CD8-positive, alpha-beta memory T cell (primary cell): ENCODE measurements at regions of chr15 and their contacts with region 1.

Region 1: DNA sequence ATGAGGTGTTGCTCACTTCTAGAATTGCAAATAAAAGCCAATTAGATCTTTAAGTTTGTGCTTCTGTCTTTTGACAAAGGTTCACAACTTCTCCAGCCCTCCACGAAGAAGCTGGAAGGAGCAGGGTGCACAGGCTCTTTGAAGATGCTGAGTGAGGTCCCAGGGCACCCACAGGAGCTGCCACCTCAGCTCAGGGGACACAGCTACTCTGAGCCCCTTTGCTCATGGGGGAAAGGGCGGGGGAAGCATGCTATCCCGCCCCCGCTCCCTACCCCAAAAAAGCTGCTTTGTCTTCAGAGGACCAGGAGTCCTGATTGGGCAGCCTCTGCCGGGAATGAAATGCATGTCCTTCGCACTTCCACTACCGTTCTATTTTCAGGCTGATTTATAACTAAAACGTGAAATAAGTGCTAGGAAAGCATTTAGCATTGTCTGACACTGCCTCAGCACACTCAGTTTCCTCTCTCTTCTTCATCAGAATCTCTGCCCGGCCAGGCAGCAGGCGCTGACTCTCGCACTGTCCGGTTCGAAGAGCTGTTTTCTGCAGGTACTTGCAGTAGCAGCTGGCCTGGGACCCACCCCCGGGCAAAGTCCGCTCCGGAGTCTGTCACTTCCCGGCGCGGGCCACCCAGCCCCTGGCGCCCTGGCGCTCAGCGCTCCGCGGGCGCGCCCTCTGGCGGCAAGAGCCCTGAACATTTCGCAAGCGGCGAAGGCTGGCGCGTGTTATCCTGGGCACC is 45.5 kb upstream of the KLHL25 start:
- DNase-seq: peak; percentile 67 to 79 (median 70)
- H3K4me3 ChIP-seq: peak overlapping the region; percentile 54
- H3K4me3 Mint-ChIP-seq: peak overlapping the region in 6 of 7 donors; percentile 50 to 81 (median 68)
- H3K27ac ChIP-seq: no peak overlapping the region
- H3K27ac Mint-ChIP-seq: no peak overlapping the region
- H3K4me1 ChIP-seq: peaks cover 4% of the 10 kb centered on the region
- H3K4me1 Mint-ChIP-seq: peaks cover 0 to 5% (median 5%) of the 10 kb centered on the region in 3 donors
- H3K27me3 ChIP-seq: no peaks in the 10 kb centered on the region
- H3K27me3 Mint-ChIP-seq: peaks cover 5 to 9% of the 10 kb centered on the region in 2 donors

Region 2: DNA sequence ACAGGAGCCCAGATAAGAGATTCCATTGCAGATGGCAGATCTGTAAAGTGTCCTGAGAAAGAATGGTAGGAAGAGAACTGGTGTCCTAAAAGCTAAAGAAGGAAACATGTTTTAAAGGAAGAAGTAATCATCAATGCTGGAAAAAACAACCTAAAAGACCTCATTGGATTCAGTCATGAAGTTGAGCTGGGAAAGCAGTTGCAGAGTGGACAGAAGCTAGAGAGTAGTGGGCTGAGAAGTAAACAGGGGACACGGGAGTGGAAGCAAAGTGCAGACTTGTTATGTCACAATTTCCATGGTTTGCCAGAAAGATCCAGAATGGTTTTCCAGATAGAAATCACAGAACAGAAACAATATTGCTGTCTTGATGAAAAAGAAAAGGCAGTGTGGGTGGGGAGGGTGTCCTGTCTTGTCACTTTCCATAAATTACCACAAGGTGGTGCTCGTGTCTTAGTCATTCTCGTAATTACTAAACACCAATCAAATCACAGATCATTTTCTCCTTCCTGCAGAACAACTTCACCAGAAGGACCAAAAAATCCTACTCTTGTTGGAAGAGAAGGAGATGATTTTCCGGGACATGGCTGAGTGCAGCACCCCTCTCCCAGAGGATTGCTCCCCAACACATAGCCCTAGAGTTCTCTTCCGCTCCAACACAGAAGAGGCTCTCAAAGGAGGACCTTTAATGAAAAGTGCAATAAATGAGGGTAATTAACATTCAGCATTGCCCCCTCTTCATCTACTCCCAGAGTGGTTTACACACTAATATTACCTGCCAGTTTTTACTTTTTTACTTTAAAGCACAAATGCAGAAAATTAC is 110.0 kb before region 1 on chr15:
- CTCF ChIA-PET with region 1: interaction called, 39 read pairs
- POLR2A ChIA-PET with region 1: no interaction called
- DNase-seq: peak in 3 of 5 donors; percentile 55 to 61 (median 55)
- H3K4me3 ChIP-seq: no peak overlapping the region
- H3K4me3 Mint-ChIP-seq: no peak overlapping the region
- H3K27ac ChIP-seq: no peak overlapping the region
- H3K27ac Mint-ChIP-seq: peak overlapping the region; percentile 18 to 89 (median 83)
- H3K4me1 ChIP-seq: no peaks in the 10 kb centered on the region
- H3K4me1 Mint-ChIP-seq: peaks cover 15 to 30% (median 25%) of the 10 kb centered on the region in 3 donors
- H3K27me3 ChIP-seq: no peaks in the 10 kb centered on the region
- H3K27me3 Mint-ChIP-seq: no peaks in the 10 kb centered on the region

Region 3: GRCh38 chr15:85742186-85742821 is 97.9 kb before region 1 on chr15:
- CTCF ChIA-PET with region 1: interaction called, 20 read pairs
- POLR2A ChIA-PET with region 1: no interaction called
- DNase-seq: no peak
- H3K4me3 ChIP-seq: no peak overlapping the region
- H3K4me3 Mint-ChIP-seq: no peak overlapping the region
- H3K27ac ChIP-seq: no peak overlapping the region
- H3K27ac Mint-ChIP-seq: peak overlapping the region in 5 of 8 donors; percentile 26 to 85 (median 69)
- H3K4me1 ChIP-seq: no peaks in the 10 kb centered on the region
- H3K4me1 Mint-ChIP-seq: peaks cover 3 to 5% (median 3%) of the 10 kb centered on the region in 3 donors
- H3K27me3 ChIP-seq: no peaks in the 10 kb centered on the region
- H3K27me3 Mint-ChIP-seq: no peaks in the 10 kb centered on the region

Region 4: DNA sequence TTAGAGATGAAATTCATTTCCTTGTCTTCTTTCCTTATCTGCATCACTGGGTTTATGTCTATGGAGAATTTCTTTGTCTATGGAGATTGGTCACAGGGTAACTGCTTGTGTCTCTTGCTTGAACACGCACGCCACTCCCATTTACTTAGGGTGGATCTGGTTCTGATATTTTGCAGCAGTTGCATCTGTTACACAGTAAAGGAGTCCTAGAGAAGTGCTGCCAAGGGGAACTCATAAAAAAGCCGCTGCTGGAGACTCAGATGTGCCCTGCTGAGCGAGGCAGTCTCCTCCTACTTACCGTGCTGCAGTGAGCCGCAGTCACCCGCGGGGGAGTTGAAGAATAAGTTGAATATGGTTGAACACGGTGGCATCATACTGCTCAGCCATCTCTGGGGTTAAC is 59.7 kb after region 1 on chr15:
- CTCF ChIA-PET with region 1: no interaction called
- POLR2A ChIA-PET with region 1: no interaction called
- DNase-seq: no peak
- H3K4me3 ChIP-seq: no peak overlapping the region
- H3K4me3 Mint-ChIP-seq: no peak overlapping the region
- H3K27ac ChIP-seq: no peak overlapping the region
- H3K27ac Mint-ChIP-seq: peak overlapping the region in 1 of 8 donors; percentile 9
- H3K4me1 ChIP-seq: no peaks in the 10 kb centered on the region
- H3K4me1 Mint-ChIP-seq: peaks cover 0 to 11% (median 3%) of the 10 kb centered on the region in 3 donors
- H3K27me3 ChIP-seq: no peaks in the 10 kb centered on the region
- H3K27me3 Mint-ChIP-seq: peaks cover 14 to 46% of the 10 kb centered on the region in 2 donors